ENCODE measurements at regions of chr11 and their contacts with region 1.

Region 1: GRCh38 chr11:28903716-28904115 is 795.5 kb downstream of the METTL15 start:
- DNase-seq: peak; percentile 3
- ATAC-seq: no peak
- H3K4me3 ChIP-seq: no peak overlapping the region
- H3K27ac ChIP-seq: no peak overlapping the region
- H3K4me1 ChIP-seq: no peaks in the 10 kb centered on the region
- H3K27me3 ChIP-seq: no peaks in the 10 kb centered on the region
- CTCF ChIP-seq: no peak
- POLR2A ChIP-seq: no peak
- RAD21 ChIP-seq: no peak

Region 2: GRCh38 chr11:28834877-28835276 is 68.8 kb before region 1 on chr11:
- CTCF ChIA-PET with region 1: no interaction called
- POLR2A ChIA-PET with region 1: no interaction called
- dilution Hi-C with region 1: no loop called
- in situ Hi-C with region 1: no loop called
- intact Hi-C with region 1: no loop called
- DNase-seq: peak; percentile 97
- ATAC-seq: peak; percentile 18
- H3K4me3 ChIP-seq: no peak overlapping the region
- H3K27ac ChIP-seq: peak overlapping the region; percentile 90
- H3K4me1 ChIP-seq: peaks cover 14% of the 10 kb centered on the region
- H3K27me3 ChIP-seq: no peaks in the 10 kb centered on the region
- CTCF ChIP-seq: no peak
- POLR2A ChIP-seq: peak; percentile 8; the same call in 1 of the 2 replicates
- RAD21 ChIP-seq: peak; percentile 27; the same call in 1 of the 2 replicates

Region 3: GRCh38 chr11:28922386-28922981 is 18.8 kb after region 1 on chr11:
- CTCF ChIA-PET with region 1: interaction called, 10 read pairs
- POLR2A ChIA-PET with region 1: no interaction called
- dilution Hi-C with region 1: no loop called
- in situ Hi-C with region 1: no loop called
- intact Hi-C with region 1: no loop called
- DNase-seq: peak; percentile 1
- ATAC-seq: peak; percentile 29; the same call in 1 of the 2 replicates
- H3K4me3 ChIP-seq: no peak overlapping the region
- H3K27ac ChIP-seq: peak overlapping the region; percentile 5; the same call in 1 of the 2 replicates
- H3K4me1 ChIP-seq: 0 out of 2 replicates have a peak, but pooled peaks cover 2% of the 10 kb centered on the region
- H3K27me3 ChIP-seq: no peaks in the 10 kb centered on the region
- CTCF ChIP-seq: no peak
- POLR2A ChIP-seq: no peak
- RAD21 ChIP-seq: no peak

Measured in IMR-90 (cell line).